ENCODE measurements at regions of chr4 and their contacts with region 1.

Region 1: DNA sequence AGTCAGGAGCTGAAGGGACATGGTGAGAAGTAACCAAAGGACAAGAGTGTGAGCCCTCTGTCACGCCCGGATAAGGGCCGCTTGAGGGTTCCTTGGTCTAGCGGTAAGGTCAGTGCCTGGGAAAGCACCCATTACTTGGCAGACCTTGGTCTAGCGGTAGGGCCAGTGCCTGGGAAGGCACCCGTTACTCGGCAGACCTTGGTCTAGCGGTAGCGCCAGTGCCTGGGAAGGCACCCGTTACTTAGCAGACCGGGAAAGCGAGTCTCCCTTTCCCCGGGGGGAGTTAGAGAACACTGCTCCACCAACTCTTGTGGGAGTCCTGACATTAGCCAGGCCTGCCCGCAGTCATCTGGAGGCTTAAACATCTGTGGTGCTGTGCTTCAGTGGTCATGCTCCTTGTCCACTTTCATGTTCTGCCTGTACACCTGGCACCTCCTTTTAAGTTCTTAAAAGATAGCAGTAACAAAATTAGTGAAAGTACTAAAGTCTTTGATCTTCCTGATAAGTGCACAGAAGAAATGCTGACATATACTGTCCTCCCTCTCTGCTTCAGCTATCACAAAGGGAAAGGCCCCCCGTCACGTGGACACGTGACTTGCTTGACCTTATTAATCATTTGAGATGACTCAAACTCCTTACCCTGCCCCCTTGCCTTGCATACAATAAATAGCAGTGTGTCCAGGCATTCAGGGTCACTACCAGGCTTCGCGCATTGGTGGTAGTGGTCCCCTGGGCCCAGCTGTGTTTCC is 9.3 kb upstream of the SEC24B start:
- DNase-seq: no peak
- H3K4me3 ChIP-seq: no peak overlapping the region
- H3K27ac ChIP-seq: no peak overlapping the region
- H3K4me1 ChIP-seq: no peaks in the 10 kb centered on the region
- H3K27me3 ChIP-seq: no peaks in the 10 kb centered on the region
- CTCF ChIP-seq: no peak

Region 2: GRCh38 chr4:109658871-109659410 is 234.7 kb after region 1 on chr4:
- CTCF ChIA-PET with region 1: interaction called, 3 read pairs
- dilution Hi-C with region 1: no loop called
- in situ Hi-C with region 1: no loop called
- intact Hi-C with region 1: loop called (anchors 2 kb)
- DNase-seq: no peak
- H3K4me3 ChIP-seq: no peak overlapping the region
- H3K27ac ChIP-seq: no peak overlapping the region
- H3K4me1 ChIP-seq: no peaks in the 10 kb centered on the region
- H3K27me3 ChIP-seq: no peaks in the 10 kb centered on the region
- CTCF ChIP-seq: peak in 1 of 2 donors; percentile 20

Region 3: GRCh38 chr4:109803924-109804571 is 379.8 kb after region 1 on chr4:
- CTCF ChIA-PET with region 1: interaction called, 3 read pairs
- dilution Hi-C with region 1: no loop called
- in situ Hi-C with region 1: loop called in 1 of 2 experiments (anchors 10 kb)
- intact Hi-C with region 1: loop called (anchors 1 kb)
- DNase-seq: peak; percentile 36
- H3K4me3 ChIP-seq: no peak overlapping the region
- H3K27ac ChIP-seq: no peak overlapping the region
- H3K4me1 ChIP-seq: no peaks in the 10 kb centered on the region
- H3K27me3 ChIP-seq: no peaks in the 10 kb centered on the region
- CTCF ChIP-seq: peak; percentile 49 to 57

Region 4: GRCh38 chr4:109815151-109816081 is 391.1 kb after region 1 on chr4 and contains the start of gene GAR1:
- CTCF ChIA-PET with region 1: no interaction called
- dilution Hi-C with region 1: no loop called
- in situ Hi-C with region 1: loop called in 1 of 2 experiments (anchors 10 kb)
- intact Hi-C with region 1: loop called (anchors 5 kb)
- DNase-seq: peak; percentile 93
- H3K4me3 ChIP-seq: peak within 1 kb of the TSS; percentile 72 to 87 (median 82)
- H3K27ac ChIP-seq: peak within 1 kb of the TSS; percentile 87
- H3K4me1 ChIP-seq: no peaks in the 10 kb centered on the region
- H3K27me3 ChIP-seq: no peaks in the 10 kb centered on the region
- CTCF ChIP-seq: no peak
- total RNA-seq, gene GAR1: 3.3 to 22.7 TPM